CD4-positive, alpha-beta memory T cell (primary cell): ENCODE measurements at regions of chr6 and their contacts with region 1.

Region 1: DNA sequence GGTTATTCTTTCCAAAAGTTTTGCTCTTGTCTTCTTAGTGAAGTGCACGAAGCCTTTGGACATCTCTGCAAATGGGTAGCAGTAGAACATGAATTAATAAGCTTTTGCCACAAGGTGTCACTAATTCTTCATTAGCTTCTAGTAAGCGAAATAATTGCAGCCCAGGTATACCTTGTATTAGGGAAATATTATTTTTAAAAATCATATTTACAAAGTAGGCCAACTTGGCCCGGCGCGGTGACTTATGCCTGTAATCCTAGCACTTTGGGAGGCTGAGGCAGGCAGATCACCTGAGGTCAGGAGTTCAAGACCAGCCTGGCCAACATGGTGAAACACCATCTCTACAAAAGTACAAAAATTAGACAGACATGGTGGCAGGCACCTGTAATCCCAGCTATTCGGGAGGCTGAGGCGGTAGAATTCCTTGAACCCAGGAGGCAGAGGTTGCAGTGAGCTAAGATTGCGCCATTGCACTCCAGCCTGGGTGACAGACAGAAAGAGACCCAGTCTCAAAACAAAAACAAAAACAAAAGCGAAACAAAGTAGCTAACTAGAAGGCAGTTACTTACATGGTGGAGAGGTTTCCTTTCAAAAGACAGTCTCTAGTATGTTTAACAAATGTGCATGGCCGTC is 8.8 kb upstream of the RSPH3 start:
- DNase-seq: peak; percentile 54 to 68 (median 66)
- H3K4me3 ChIP-seq: peak overlapping the region in 1 of 2 donors; percentile 29
- H3K4me3 Mint-ChIP-seq: peak overlapping the region; percentile 64 to 77 (median 72)
- H3K27ac ChIP-seq: no peak overlapping the region
- H3K27ac Mint-ChIP-seq: peak overlapping the region; percentile 7 to 90 (median 77)
- H3K4me1 ChIP-seq: peaks cover 44% of the 10 kb centered on the region
- H3K4me1 Mint-ChIP-seq: peaks cover 37 to 55% (median 47%) of the 10 kb centered on the region in 4 donors
- H3K27me3 ChIP-seq: no peaks in the 10 kb centered on the region
- H3K27me3 Mint-ChIP-seq: no peaks in the 10 kb centered on the region

Region 2: GRCh38 chr6:159098636-159099106 is 89.9 kb after region 1 on chr6:
- CTCF ChIA-PET with region 1: interaction called, 676 read pairs
- POLR2A ChIA-PET with region 1: interaction called, 144 read pairs
- intact Hi-C with region 1: no loop called
- DNase-seq: peak; percentile 82 to 91 (median 88)
- H3K4me3 ChIP-seq: peak overlapping the region in 1 of 2 donors; percentile 29
- H3K4me3 Mint-ChIP-seq: peak overlapping the region; percentile 71 to 89 (median 81)
- H3K27ac ChIP-seq: peak overlapping the region; percentile 76
- H3K27ac Mint-ChIP-seq: peak overlapping the region; percentile 93 to 99 (median 98)
- H3K4me1 ChIP-seq: peaks cover 64% of the 10 kb centered on the region
- H3K4me1 Mint-ChIP-seq: peaks cover 43 to 82% (median 60%) of the 10 kb centered on the region in 4 donors
- H3K27me3 ChIP-seq: no peaks in the 10 kb centered on the region
- H3K27me3 Mint-ChIP-seq: no peaks in the 10 kb centered on the region

Region 3: DNA sequence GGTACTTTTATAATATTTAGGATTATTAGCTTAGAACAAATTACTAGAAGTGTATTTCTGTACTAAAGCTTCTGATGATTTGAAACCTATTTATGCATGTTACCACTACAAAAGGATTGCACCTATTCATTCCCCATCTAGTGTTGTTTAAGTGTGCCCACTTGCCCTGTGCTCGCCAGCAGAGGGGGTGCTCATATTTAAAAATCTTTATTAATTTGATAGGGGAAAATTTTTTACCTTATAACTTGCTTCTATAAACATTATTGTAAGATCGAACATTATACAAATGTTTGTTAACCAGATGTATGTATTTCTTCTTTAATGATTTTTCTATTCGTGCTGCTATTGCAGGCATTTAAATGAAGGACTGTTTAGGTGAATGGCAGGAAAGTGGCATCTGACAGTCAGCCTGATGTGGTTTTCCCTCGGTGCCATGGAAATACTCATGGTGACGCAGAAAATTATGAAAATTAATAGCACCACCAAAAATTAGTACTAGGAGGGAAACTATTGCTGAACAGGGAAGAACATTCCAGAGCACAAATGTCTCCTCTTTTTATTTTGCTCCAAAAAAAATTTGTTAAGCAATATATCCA is 116.3 kb after region 1 on chr6:
- CTCF ChIA-PET with region 1: interaction called, 440 read pairs
- POLR2A ChIA-PET with region 1: no interaction called
- intact Hi-C with region 1: no loop called
- DNase-seq: no peak
- H3K4me3 ChIP-seq: no peak overlapping the region
- H3K4me3 Mint-ChIP-seq: no peak overlapping the region
- H3K27ac ChIP-seq: no peak overlapping the region
- H3K27ac Mint-ChIP-seq: no peak overlapping the region
- H3K4me1 ChIP-seq: no peaks in the 10 kb centered on the region
- H3K4me1 Mint-ChIP-seq: no peaks in the 10 kb centered on the region
- H3K27me3 ChIP-seq: no peaks in the 10 kb centered on the region
- H3K27me3 Mint-ChIP-seq: peaks cover 0 to 1% of the 10 kb centered on the region in 2 donors

Region 4: GRCh38 chr6:159142531-159142930 is 133.8 kb after region 1 on chr6:
- CTCF ChIA-PET with region 1: interaction called, 440 read pairs
- POLR2A ChIA-PET with region 1: interaction called, 36 read pairs
- intact Hi-C with region 1: no loop called
- DNase-seq: no peak
- H3K4me3 ChIP-seq: no peak overlapping the region
- H3K4me3 Mint-ChIP-seq: no peak overlapping the region
- H3K27ac ChIP-seq: no peak overlapping the region
- H3K27ac Mint-ChIP-seq: no peak overlapping the region
- H3K4me1 ChIP-seq: no peaks in the 10 kb centered on the region
- H3K4me1 Mint-ChIP-seq: no peaks in the 10 kb centered on the region
- H3K27me3 ChIP-seq: no peaks in the 10 kb centered on the region
- H3K27me3 Mint-ChIP-seq: peaks cover 8 to 9% of the 10 kb centered on the region in 2 donors